Common myeloid progenitor, CD34-positive (primary cell): ENCODE measurements at regions of chr17 and their contacts with region 1.

Region 1: DNA sequence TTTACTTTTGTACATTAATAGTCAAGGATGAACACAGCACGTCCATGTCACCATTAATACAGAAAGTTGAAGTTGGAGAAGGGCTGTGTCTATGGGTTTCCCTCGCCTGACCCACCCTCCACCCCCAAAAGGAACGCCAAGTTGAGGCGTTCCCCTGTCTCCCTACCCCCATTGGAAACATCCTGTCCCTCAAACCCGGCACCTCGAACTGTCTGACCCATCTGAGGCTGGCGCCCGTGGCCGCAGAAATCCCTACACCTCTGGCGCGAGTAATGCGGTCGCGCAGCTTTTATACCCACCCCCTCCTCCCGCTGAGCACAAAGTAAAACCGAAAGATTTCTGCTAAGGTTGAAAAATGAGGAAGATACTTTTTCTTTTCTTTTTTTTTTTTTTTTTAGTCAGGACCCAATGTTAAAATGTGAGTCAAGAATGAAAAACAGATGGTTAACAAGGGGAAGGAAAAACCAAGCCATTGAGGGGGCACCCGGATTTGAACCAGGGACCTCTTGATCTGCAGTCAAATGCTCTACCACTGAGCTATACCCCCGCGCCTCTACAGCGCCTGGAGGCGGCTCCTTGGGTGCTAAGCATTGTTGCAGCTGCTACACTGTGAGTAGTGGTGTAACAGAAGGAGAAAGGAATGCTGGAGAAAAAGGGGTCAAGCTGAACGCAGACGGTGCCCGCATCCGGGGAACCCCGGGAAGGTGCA is 887 bp upstream of the LASP1 start:
- DNase-seq: peak; percentile 88 to 95 (median 94)
- H3K4me3 ChIP-seq: peak overlapping the region; percentile 88 to 99 (median 96)
- H3K27ac ChIP-seq: peak overlapping the region in 1 of 2 experiments; percentile 87
- H3K4me1 ChIP-seq: peaks cover 8 to 49% (median 37%) of the 10 kb centered on the region in 4 experiments
- H3K27me3 ChIP-seq: no peaks in the 10 kb centered on the region

Region 2: GRCh38 chr17:38809828-38810227 is 59.1 kb before region 1 on chr17:
- CTCF ChIA-PET with region 1: no interaction called
- POLR2A ChIA-PET with region 1: no interaction called
- DNase-seq: no peak
- H3K4me3 ChIP-seq: no peak overlapping the region
- H3K27ac ChIP-seq: no peak overlapping the region
- H3K4me1 ChIP-seq: no peaks in the 10 kb centered on the region
- H3K27me3 ChIP-seq: no peaks in the 10 kb centered on the region

Region 3: GRCh38 chr17:38853292-38854219 is 15.4 kb before region 1 on chr17 and contains the start of gene RPL23:
- CTCF ChIA-PET with region 1: interaction called, 5 read pairs
- POLR2A ChIA-PET with region 1: interaction called, 22 read pairs
- DNase-seq: peak; percentile 98 to 99 (median 99)
- H3K4me3 ChIP-seq: peak within 1 kb of the TSS; percentile 53 to 97 (median 89)
- H3K27ac ChIP-seq: peak within 1 kb of the TSS; percentile 96 to 97
- H3K4me1 ChIP-seq: peaks cover 21 to 33% (median 26%) of the 10 kb centered on the region in 4 experiments
- H3K27me3 ChIP-seq: no peaks in the 10 kb centered on the region

Region 4: GRCh38 chr17:38879878-38880682 is 11.1 kb after region 1 on chr17:
- CTCF ChIA-PET with region 1: interaction called, 14 read pairs
- POLR2A ChIA-PET with region 1: interaction called, 4 read pairs
- DNase-seq: peak in 2 of 3 donors; percentile 11 to 28
- H3K4me3 ChIP-seq: no peak overlapping the region
- H3K27ac ChIP-seq: no peak overlapping the region
- H3K4me1 ChIP-seq: peaks cover 5 to 85% (median 54%) of the 10 kb centered on the region in 4 experiments
- H3K27me3 ChIP-seq: no peaks in the 10 kb centered on the region

Region 5: DNA sequence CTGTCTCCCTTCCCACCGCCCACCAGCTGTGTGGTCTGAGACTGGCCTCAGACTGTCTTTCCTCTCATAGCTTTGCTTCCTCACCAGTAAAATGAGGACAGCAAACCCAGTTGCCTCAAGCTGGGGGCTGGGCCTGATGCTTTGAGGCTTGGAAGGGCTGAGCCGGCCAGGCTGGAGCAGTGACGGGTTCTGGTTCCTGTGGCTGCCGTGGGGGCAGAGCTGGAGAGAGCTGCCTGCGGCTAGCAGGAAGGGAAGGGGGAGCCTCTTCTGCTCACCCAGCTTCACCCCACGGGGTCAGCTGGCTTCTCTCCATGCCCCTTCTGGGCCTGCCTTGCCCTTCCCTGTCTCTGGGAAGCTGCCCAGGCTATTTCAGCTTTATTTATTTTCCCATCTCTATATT is 24.6 kb after region 1 on chr17:
- CTCF ChIA-PET with region 1: interaction called, 15 read pairs
- POLR2A ChIA-PET with region 1: interaction called, 12 read pairs
- DNase-seq: peak in 2 of 3 donors; percentile 35 to 41
- H3K4me3 ChIP-seq: peak overlapping the region in 1 of 7 experiments; percentile 27
- H3K27ac ChIP-seq: peak overlapping the region in 1 of 2 experiments; percentile 36
- H3K4me1 ChIP-seq: peaks cover 6 to 76% (median 42%) of the 10 kb centered on the region in 4 experiments
- H3K27me3 ChIP-seq: no peaks in the 10 kb centered on the region

Region 6: GRCh38 chr17:38898812-38899348 is 29.9 kb after region 1 on chr17:
- CTCF ChIA-PET with region 1: interaction called, 15 read pairs
- POLR2A ChIA-PET with region 1: interaction called, 12 read pairs
- DNase-seq: peak; percentile 55 to 86 (median 81)
- H3K4me3 ChIP-seq: peak overlapping the region in 4 of 7 experiments; percentile 32 to 48 (median 42)
- H3K27ac ChIP-seq: peak overlapping the region; percentile 54 to 76
- H3K4me1 ChIP-seq: peaks cover 13 to 69% (median 47%) of the 10 kb centered on the region in 4 experiments
- H3K27me3 ChIP-seq: no peaks in the 10 kb centered on the region

Region 7: GRCh38 chr17:38925263-38925995 is 56.5 kb after region 1 on chr17 and contains the start of gene LASP1NB:
- CTCF ChIA-PET with region 1: interaction called, 7 read pairs
- POLR2A ChIA-PET with region 1: interaction called, 10 read pairs
- DNase-seq: peak in 2 of 3 donors; percentile 36 to 39
- H3K4me3 ChIP-seq: peak within 1 kb of the TSS in 1 of 7 experiments; percentile 14
- H3K27ac ChIP-seq: no peak within 1 kb of the TSS
- H3K4me1 ChIP-seq: peaks cover 14 to 31% (median 24%) of the 10 kb centered on the region in 4 experiments
- H3K27me3 ChIP-seq: no peaks in the 10 kb centered on the region